ENCODE measurements at regions of chr12 and their contacts with region 1.

Region 1: DNA sequence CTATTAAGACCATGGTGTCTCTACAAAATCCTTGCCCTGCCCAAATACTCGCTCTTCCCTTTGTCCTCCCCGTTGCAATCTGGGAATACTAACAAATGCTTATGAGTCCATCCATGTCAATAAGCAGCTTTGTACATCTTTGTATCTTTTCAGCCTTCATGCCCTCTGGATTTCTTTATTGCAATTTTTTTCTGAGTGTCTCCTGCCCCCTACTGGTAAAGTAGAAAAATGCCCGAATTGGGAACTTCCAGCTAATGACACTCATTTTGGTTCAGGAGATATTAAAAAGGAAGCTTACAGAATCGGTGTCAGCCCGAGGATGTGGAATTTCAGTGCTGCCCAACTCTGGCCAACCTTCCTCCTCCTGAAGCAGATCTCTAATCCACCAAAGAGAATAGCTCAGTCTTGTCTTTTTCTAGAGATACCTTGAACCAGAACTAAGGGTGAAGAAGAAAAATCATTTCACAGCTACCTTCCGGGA is 46.0 kb downstream of the SH2B3 start:
- DNase-seq: peak; percentile 54
- CTCF ChIP-seq: peak; percentile 72

Region 2: DNA sequence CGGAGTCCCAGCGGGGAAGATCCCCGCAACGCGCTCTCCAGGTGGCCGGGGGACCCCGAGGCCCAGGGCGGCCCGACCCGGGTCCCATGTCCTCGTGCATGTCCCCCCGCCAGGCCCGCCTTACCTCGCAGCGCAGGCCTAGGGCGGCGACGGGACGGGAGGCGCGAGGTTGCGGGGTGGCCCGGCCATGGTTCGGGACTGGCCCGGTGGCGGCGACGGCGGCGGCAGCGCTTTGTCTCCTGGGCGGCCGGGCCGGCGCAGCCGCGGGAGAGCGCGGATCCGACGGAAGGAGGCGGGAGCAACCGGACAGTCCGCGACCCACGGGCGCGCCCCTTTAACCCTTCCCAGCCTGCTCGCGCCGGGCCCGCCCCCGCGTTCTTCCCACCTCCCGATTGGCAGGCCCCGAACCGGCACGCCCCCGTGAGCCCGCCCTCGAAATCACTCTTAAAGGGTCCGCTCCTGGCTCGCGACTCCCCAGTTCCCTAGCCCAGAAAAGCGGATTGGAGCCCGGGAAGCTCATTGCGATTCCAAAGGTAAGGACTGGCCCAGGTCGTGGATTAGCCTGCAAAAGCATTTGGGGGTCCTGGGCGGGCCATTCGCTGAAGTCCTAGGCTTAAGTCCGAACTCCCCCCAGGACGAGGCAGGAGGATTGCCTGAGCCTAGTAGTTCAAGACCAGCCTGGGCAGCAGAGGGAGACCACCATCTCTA is 82.7 kb before region 1 on chr12 and contains the start of gene PHETA1:
- CTCF ChIA-PET with region 1: interaction called, 22 read pairs
- POLR2A ChIA-PET with region 1: no interaction called
- DNase-seq: peak; percentile 94
- CTCF ChIP-seq: no peak

Region 3: DNA sequence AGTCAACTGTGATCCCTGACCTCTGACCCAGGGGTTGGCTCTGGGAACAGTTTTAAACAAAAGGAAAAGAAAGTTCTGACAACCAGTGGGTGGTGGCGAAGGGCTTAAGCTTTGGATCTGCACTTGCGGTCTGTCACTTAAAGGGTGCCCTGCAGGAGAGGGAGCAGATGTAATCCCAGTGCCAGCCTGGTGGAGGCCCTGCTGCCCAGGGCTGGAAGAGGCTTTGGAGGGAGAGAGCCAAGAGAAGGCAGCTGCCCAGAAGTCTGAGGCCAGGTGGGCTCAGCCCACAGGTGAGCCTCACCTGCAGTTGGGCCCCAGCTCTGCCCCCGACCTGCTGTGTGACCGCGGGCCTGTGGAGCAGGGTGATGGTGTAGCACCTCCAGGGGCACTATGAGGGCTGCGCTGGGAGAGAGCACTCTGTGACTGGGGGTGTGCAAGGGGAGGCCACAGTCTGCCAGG is 26.9 kb before region 1 on chr12:
- CTCF ChIA-PET with region 1: interaction called, 40 read pairs
- POLR2A ChIA-PET with region 1: interaction called, 3 read pairs
- DNase-seq: no peak
- CTCF ChIP-seq: peak; percentile 10

Region 4: DNA sequence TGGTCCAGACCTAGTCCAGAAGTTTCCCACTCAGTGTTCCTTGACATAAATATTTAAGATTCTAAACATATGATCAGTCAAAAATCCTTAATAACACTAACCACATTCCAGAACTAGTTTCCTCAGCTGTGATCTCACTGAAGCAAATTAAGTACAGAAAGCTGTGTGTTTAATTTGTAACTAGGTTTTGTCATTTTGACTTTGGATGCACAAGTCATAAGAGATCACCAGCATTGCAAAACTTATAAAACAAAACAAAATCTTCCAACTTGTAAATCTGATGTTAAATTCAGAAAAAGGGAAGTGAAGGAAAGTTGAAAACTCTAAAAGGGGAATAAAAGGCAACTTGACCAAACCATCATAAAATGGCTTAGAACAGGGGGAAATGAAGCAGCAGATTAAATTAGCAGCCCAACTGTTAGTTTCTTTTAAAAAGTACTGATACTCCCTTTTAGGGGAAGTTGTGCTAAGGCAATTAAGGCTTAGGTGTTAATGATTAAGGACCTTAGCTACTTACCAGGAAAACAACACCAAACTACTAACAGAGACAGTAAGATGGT is 10.6 kb after region 1 on chr12:
- CTCF ChIA-PET with region 1: interaction called, 67 read pairs
- POLR2A ChIA-PET with region 1: interaction called, 3 read pairs
- DNase-seq: no peak
- CTCF ChIP-seq: no peak

Region 5: DNA sequence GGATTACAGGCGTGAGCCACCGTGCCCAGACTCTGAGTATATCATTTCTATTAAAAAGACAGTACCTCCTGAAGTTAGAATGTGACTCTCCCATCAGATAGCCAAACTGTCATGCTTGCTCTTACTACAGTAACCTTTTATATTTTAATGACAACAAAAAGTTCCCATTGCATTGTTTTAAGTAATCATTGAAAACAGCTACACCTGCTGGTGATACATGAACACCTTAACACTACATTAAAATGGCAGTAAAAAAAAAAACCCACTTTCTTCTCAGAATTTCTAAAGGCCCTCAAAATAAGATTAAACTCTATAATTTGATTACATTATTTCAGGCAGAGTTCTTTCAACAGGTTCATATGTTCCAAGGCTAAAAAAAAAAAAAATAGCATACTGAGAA is 30.8 kb after region 1 on chr12:
- CTCF ChIA-PET with region 1: interaction called, 20 read pairs
- POLR2A ChIA-PET with region 1: no interaction called
- DNase-seq: no peak
- CTCF ChIP-seq: no peak